Activated CD4-positive, alpha-beta memory T cell treated with anti-CD3 and anti-CD28 coated beads for 36 hours (primary cell): ENCODE measurements at regions of chr12 and their contacts with region 1.

Region 1: DNA sequence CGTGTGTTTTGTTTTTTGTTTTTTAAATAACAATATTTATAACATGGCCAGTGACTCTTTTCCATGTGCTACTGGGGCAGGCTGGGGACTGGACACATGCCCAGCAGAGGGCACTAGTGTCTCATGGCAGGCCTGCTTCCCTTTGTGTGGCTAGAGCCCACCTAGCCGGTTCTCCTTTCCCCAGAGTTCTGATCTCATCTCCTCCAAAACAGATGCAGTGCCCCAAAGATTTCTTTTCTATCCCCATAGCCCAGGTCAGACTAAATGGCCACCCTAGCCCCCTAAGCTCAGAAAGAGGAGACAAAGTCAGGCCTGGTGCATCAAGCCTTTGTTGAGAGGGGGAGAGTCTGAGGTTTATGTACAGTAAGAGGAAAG is 21.2 kb downstream of the PRPF40B start:
- DNase-seq: peak; percentile 86
- H3K4me3 Mint-ChIP-seq: no peak overlapping the region
- H3K27ac Mint-ChIP-seq: peak overlapping the region; percentile 74
- H3K4me1 Mint-ChIP-seq: peaks cover 13% of the 10 kb centered on the region
- H3K27me3 Mint-ChIP-seq: no peaks in the 10 kb centered on the region

Region 2: DNA sequence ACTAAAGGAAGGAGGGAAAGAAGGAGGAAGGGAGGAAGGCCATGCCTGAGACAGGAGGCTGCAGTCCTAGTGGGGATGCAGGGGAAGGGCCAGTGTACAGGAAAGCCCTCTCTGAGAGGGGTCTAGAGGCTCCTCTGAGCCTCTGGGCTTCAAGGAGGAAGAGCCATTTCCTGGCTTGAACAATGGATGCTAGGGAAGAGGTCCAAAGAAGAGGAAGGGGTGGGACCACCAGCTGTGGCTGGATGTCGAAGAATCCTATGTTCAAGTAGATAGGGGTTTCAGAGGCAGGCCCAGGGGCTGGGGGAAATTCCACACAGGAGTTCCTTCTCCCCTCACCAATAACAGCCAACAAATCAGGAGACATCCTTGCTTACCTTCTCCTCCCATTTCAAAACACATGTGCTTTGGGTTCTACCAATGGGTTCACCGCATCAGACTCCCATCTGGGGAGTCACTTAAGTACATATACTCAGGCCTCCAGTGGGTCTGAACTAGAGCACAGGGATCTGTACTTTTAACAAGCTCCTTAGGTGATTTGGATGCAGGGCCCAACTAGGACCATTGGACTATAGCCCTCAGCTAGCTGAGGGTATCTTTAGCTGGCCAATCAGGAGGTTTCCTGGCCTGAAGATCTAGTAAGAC is 11.1 kb after region 1 on chr12:
- CTCF ChIA-PET with region 1: interaction called, 12 read pairs
- POLR2A ChIA-PET with region 1: interaction called, 4 read pairs
- intact Hi-C with region 1: no loop called
- DNase-seq: no peak
- H3K4me3 Mint-ChIP-seq: no peak overlapping the region
- H3K27ac Mint-ChIP-seq: no peak overlapping the region
- H3K4me1 Mint-ChIP-seq: peaks cover 22% of the 10 kb centered on the region
- H3K27me3 Mint-ChIP-seq: no peaks in the 10 kb centered on the region

Region 3: DNA sequence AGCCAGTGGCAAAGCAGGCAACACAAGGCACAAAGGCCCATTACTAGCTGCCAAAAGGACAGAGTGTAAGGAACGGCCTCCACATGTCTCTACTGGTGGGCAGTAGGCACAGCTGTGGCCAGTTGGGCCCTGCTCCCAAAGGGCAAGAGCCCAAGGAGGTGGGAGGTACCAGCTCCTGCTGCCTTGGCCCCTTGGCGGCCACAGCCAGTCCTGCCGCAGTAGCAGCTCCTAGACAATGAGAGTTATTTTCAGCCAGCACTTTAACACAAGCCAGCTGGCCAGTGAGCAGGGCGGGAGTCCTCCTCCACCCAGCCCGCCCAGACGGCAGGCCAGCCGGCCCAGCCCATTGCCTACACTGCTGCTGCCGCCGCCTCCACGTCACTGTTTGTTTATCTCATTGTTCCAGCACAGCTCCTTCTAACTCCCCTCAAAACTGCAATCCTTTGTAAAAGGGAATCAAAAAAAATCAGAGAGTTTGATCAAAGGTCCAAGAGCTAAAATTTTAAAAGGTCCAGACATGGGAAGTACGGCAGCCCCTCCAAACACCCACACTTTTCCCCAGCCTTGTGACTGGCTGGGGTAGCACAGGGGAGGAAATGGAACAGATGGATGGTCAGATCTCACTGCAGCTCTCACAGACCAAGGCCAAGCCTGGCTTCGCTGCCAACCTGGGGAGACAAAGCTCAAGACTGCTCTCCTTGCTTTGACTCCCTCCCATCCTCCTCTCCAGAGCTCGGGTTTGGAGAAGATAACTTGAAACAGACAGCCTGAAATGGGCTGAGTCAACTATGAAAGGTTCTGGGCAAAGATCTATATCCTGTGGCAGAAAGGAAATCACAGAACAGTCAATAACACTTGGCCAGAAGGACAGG is 29.1 kb after region 1 on chr12:
- CTCF ChIA-PET with region 1: interaction called, 11 read pairs
- POLR2A ChIA-PET with region 1: no interaction called
- intact Hi-C with region 1: loop called (anchors 2 kb)
- DNase-seq: peak; percentile 16
- H3K4me3 Mint-ChIP-seq: peak overlapping the region; percentile 2
- H3K27ac Mint-ChIP-seq: peak overlapping the region; percentile 94
- H3K4me1 Mint-ChIP-seq: peaks cover 75% of the 10 kb centered on the region
- H3K27me3 Mint-ChIP-seq: no peaks in the 10 kb centered on the region

Region 4: DNA sequence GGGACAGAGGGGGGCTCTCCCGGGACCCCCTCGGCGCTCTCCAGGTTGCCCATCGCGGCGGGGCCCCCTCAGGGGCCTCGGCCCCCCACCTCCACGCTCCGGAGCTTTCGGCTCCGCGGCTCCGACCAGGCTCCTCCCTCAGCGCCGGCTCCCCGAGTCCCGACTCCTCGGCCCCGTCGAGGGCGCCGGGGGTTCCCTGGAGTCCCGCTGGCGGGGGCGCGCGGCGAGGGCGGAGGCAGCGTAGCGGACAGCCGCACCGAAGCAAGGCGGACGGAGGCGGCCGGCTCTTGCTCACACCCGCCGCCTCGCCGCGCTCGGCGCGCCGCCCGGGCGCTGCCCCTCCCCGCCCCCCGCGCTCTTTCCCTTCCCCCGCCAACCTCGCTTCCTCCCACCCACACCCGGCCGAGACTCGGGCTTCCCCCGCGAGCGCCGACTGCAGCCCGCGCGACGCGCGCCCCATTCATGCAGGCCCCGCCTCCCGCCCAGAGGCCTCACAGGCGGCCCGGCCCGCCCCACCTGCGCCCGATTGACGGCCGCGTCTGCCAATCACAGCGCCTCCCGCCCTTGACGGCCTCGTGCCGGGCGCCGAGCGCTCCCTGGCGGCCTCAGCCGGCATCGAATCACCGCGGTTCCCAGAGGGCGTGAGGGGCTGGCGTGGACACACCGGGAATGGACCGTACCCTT is 62.7 kb after region 1 on chr12 and contains the start of gene FMNL3:
- CTCF ChIA-PET with region 1: interaction called, 281 read pairs
- POLR2A ChIA-PET with region 1: interaction called, 8 read pairs
- intact Hi-C with region 1: loop called (anchors 1 kb)
- DNase-seq: peak; percentile 98
- H3K4me3 Mint-ChIP-seq: peak within 1 kb of the TSS; percentile 85
- H3K27ac Mint-ChIP-seq: peak within 1 kb of the TSS; percentile 72
- H3K4me1 Mint-ChIP-seq: peaks cover 43% of the 10 kb centered on the region
- H3K27me3 Mint-ChIP-seq: peaks cover 3% of the 10 kb centered on the region
- total RNA-seq, gene FMNL3: 31.2 to 31.9 TPM

Region 5: GRCh38 chr12:49842519-49843352 is 198.1 kb after region 1 on chr12 and contains the start of gene BCDIN3D:
- CTCF ChIA-PET with region 1: interaction called, 5 read pairs
- POLR2A ChIA-PET with region 1: no interaction called
- intact Hi-C with region 1: loop called (anchors 1 kb)
- DNase-seq: peak; percentile 97
- H3K4me3 Mint-ChIP-seq: peak within 1 kb of the TSS; percentile 90
- H3K27ac Mint-ChIP-seq: peak within 1 kb of the TSS; percentile 94
- H3K4me1 Mint-ChIP-seq: peaks cover 33% of the 10 kb centered on the region
- H3K27me3 Mint-ChIP-seq: no peaks in the 10 kb centered on the region
- total RNA-seq, gene BCDIN3D: 5.8 to 6.1 TPM